CD8-positive, alpha-beta T cell (primary cell): ENCODE measurements at regions of chr12 and their contacts with region 1.

Region 1: GRCh38 chr12:12999959-13000615 is at the start of gene HEBP1:
- DNase-seq: peak; percentile 90 to 98 (median 96)
- ATAC-seq: peak; percentile 95
- H3K4me3 ChIP-seq: peak within 1 kb of the TSS; percentile 84 to 85
- H3K4me3 Mint-ChIP-seq: peak within 1 kb of the TSS; percentile 96
- H3K27ac ChIP-seq: peak within 1 kb of the TSS; percentile 41 to 55
- H3K27ac Mint-ChIP-seq: peak within 1 kb of the TSS; percentile 82
- H3K4me1 ChIP-seq: peaks cover 20% of the 10 kb centered on the region
- H3K4me1 Mint-ChIP-seq: peaks cover 29% of the 10 kb centered on the region
- H3K27me3 ChIP-seq: peaks cover 0 to 4% of the 10 kb centered on the region in 2 experiments
- H3K27me3 Mint-ChIP-seq: peaks cover 6% of the 10 kb centered on the region
- CTCF ChIP-seq: no peak
- total RNA-seq, gene HEBP1: 4.6 to 5.6 TPM

Region 2: DNA sequence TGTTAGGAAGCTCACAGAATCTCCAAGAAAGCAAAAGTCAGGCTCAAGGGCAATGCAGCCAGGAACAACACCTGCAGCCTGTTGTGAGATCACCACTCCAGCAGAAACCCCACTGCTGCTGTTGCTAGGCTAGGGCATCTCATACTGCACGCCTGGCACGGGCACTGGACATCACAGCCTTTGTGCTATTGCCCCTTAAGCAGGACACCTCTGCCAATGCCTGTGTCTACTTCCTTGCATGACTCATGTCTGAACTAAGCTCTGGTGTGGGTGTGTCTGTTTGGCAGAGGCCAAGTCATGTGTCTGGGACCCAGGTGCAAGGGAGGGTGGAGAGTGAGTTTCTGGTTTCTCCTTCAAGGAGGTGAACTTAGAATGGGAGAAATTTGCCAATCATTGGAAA is 196.9 kb before region 1 on chr12:
- CTCF ChIA-PET with region 1: no interaction called
- POLR2A ChIA-PET with region 1: no interaction called
- intact Hi-C with region 1: loop called in 1 of 2 experiments (anchors 1 kb)
- DNase-seq: peak in 5 of 9 experiments; percentile 28 to 46 (median 38)
- ATAC-seq: peak; percentile 35
- H3K4me3 ChIP-seq: no peak overlapping the region
- H3K4me3 Mint-ChIP-seq: no peak overlapping the region
- H3K27ac ChIP-seq: no peak overlapping the region
- H3K27ac Mint-ChIP-seq: peak overlapping the region; percentile 73
- H3K4me1 ChIP-seq: peaks cover 22% of the 10 kb centered on the region
- H3K4me1 Mint-ChIP-seq: peaks cover 41% of the 10 kb centered on the region
- H3K27me3 ChIP-seq: no peaks in the 10 kb centered on the region
- H3K27me3 Mint-ChIP-seq: no peaks in the 10 kb centered on the region
- CTCF ChIP-seq: no peak

Region 3: GRCh38 chr12:12899530-12900380 is 100.3 kb before region 1 on chr12:
- CTCF ChIA-PET with region 1: no interaction called
- POLR2A ChIA-PET with region 1: no interaction called
- intact Hi-C with region 1: no loop called
- DNase-seq: no peak
- ATAC-seq: no peak
- H3K4me3 ChIP-seq: no peak overlapping the region
- H3K4me3 Mint-ChIP-seq: no peak overlapping the region
- H3K27ac ChIP-seq: no peak overlapping the region
- H3K27ac Mint-ChIP-seq: no peak overlapping the region
- H3K4me1 ChIP-seq: no peaks in the 10 kb centered on the region
- H3K4me1 Mint-ChIP-seq: no peaks in the 10 kb centered on the region
- H3K27me3 ChIP-seq: no peaks in the 10 kb centered on the region
- H3K27me3 Mint-ChIP-seq: peaks cover 10% of the 10 kb centered on the region
- CTCF ChIP-seq: no peak

Region 4: GRCh38 chr12:13011098-13011497 is 11.0 kb after region 1 on chr12:
- CTCF ChIA-PET with region 1: no interaction called
- POLR2A ChIA-PET with region 1: no interaction called
- intact Hi-C with region 1: no loop called
- DNase-seq: no peak
- ATAC-seq: no peak
- H3K4me3 ChIP-seq: no peak overlapping the region
- H3K4me3 Mint-ChIP-seq: no peak overlapping the region
- H3K27ac ChIP-seq: no peak overlapping the region
- H3K27ac Mint-ChIP-seq: no peak overlapping the region
- H3K4me1 ChIP-seq: no peaks in the 10 kb centered on the region
- H3K4me1 Mint-ChIP-seq: no peaks in the 10 kb centered on the region
- H3K27me3 ChIP-seq: no peaks in the 10 kb centered on the region
- H3K27me3 Mint-ChIP-seq: peaks cover 6% of the 10 kb centered on the region
- CTCF ChIP-seq: no peak

Region 5: DNA sequence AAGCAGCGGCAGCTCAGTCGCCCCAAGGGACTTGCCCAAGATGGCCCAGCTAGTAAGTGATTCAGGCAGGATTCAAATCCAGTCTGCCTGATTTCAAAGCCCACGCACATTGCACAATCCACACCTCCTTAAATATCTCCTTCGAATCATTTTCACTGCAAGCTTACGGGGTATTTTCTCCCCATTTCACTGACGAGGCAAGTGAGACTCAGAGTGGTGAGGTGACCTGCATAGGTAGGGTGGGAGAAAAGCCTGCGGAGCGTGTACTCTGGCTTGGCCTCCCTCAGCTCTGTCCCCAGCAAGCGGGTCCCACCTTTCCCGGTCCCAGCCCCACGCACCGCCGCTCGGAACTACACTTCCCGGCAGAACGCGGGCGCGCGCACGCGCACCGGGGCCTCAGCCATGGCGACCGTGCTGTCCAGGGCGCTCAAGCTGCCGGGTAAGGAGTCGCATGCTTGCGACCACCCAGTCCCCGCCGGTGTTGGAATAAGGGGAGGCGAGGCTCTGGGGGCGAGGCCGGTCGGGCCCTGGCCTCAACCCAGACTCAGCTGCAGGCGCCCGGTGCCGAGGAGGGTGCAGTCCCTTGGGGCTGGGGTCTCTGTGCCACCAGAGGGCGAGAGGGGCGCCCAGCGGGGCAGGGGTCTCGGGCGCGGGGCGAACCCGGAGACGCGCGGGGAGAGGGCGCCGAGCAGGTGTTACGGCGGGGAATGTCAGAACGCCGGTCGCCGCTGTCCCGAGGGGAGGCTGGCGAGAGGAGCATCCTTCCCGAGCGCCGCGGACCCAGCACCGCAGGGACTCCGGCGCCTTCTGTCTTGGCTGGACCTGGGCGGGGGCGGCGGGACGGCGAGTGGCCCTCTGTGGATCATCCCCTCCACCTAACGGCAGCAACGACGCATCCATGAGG is 44.2 kb after region 1 on chr12 and contains the start of gene FAM234B:
- CTCF ChIA-PET with region 1: no interaction called
- POLR2A ChIA-PET with region 1: interaction called, 4 read pairs
- intact Hi-C with region 1: loop called (anchors 1 kb)
- DNase-seq: peak; percentile 44 to 84 (median 71)
- ATAC-seq: peak; percentile 96
- H3K4me3 ChIP-seq: peak within 1 kb of the TSS; percentile 69 to 96
- H3K4me3 Mint-ChIP-seq: peak within 1 kb of the TSS; percentile 86
- H3K27ac ChIP-seq: peak within 1 kb of the TSS in 1 of 2 experiments; percentile 56
- H3K27ac Mint-ChIP-seq: peak within 1 kb of the TSS; percentile 63
- H3K4me1 ChIP-seq: peaks cover 5% of the 10 kb centered on the region
- H3K4me1 Mint-ChIP-seq: peaks cover 21% of the 10 kb centered on the region
- H3K27me3 ChIP-seq: no peaks in the 10 kb centered on the region
- H3K27me3 Mint-ChIP-seq: no peaks in the 10 kb centered on the region
- CTCF ChIP-seq: peak; percentile 13
- total RNA-seq, gene FAM234B: 2.2 to 2.7 TPM

Region 6: DNA sequence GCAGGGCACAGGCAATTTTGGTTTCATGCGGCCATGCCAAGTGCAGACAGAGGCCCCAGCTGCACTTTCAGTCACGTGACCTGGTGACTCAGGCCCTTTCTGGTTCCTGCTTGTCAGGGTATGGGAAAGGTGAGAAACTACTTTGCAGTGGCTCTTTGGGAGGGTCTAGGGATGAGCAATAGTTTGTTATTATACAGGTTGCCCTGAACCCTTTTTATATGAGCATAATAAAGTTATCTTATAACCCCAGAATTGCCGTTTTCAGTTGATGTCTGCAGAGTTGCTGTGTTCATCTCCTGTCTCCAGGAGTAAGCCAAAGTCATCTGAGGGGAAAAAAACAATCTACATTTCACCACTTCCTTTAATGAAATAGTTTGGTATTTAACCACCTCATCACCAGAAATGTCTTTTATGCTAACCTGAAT is 165.5 kb after region 1 on chr12:
- CTCF ChIA-PET with region 1: no interaction called
- POLR2A ChIA-PET with region 1: no interaction called
- intact Hi-C with region 1: loop called in 1 of 2 experiments (anchors 1 kb)
- DNase-seq: peak in 8 of 9 experiments; percentile 58 to 80 (median 70)
- ATAC-seq: peak; percentile 82
- H3K4me3 ChIP-seq: peak overlapping the region in 1 of 2 experiments; percentile 2
- H3K4me3 Mint-ChIP-seq: peak overlapping the region; percentile 1
- H3K27ac ChIP-seq: no peak overlapping the region
- H3K27ac Mint-ChIP-seq: peak overlapping the region; percentile 49
- H3K4me1 ChIP-seq: peaks cover 16% of the 10 kb centered on the region
- H3K4me1 Mint-ChIP-seq: peaks cover 20% of the 10 kb centered on the region
- H3K27me3 ChIP-seq: no peaks in the 10 kb centered on the region
- H3K27me3 Mint-ChIP-seq: no peaks in the 10 kb centered on the region
- CTCF ChIP-seq: no peak

Region 7: DNA sequence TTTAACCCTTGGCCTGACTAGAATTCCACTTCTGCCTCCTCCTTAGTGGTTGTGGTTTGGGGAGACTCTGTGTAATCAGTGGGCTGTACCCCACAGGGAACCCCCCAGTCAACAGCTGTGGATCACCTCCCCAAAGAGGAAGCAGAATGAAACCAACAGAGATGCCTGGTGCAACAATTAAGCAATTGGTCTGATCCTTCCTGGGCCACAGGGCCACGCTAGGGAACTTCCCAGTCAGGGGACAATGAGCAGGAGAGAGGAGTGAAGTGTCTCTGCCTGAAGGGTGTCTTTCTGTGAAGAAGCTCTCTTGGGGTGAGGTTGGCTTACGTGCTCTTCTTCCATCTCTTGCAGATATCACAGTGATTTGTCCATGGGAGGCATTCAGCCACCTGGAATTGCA is 1981.0 kb after region 1 on chr12:
- CTCF ChIA-PET with region 1: no interaction called
- POLR2A ChIA-PET with region 1: no interaction called
- intact Hi-C with region 1: loop called in 1 of 2 experiments (anchors 5 kb)
- DNase-seq: peak in 1 of 9 experiments; percentile 43
- ATAC-seq: no peak
- H3K4me3 ChIP-seq: no peak overlapping the region
- H3K4me3 Mint-ChIP-seq: no peak overlapping the region
- H3K27ac ChIP-seq: no peak overlapping the region
- H3K27ac Mint-ChIP-seq: no peak overlapping the region
- H3K4me1 ChIP-seq: peaks cover 59% of the 10 kb centered on the region
- H3K4me1 Mint-ChIP-seq: peaks cover 72% of the 10 kb centered on the region
- H3K27me3 ChIP-seq: no peaks in the 10 kb centered on the region
- H3K27me3 Mint-ChIP-seq: no peaks in the 10 kb centered on the region
- CTCF ChIP-seq: no peak